Common myeloid progenitor, CD34-positive (primary cell): ENCODE measurements at regions of chr12 and their contacts with region 1.

Region 1: GRCh38 chr12:26884765-26885576 is 52.0 kb upstream of the ITPR2 start:
- DNase-seq: peak; percentile 89 to 94 (median 91)
- H3K4me3 ChIP-seq: peak overlapping the region in 4 of 7 experiments; percentile 11 to 62 (median 44)
- H3K27ac ChIP-seq: no peak overlapping the region
- H3K4me1 ChIP-seq: peaks cover 0 to 4% (median 1%) of the 10 kb centered on the region in 4 experiments
- H3K27me3 ChIP-seq: no peaks in the 10 kb centered on the region

Region 2: DNA sequence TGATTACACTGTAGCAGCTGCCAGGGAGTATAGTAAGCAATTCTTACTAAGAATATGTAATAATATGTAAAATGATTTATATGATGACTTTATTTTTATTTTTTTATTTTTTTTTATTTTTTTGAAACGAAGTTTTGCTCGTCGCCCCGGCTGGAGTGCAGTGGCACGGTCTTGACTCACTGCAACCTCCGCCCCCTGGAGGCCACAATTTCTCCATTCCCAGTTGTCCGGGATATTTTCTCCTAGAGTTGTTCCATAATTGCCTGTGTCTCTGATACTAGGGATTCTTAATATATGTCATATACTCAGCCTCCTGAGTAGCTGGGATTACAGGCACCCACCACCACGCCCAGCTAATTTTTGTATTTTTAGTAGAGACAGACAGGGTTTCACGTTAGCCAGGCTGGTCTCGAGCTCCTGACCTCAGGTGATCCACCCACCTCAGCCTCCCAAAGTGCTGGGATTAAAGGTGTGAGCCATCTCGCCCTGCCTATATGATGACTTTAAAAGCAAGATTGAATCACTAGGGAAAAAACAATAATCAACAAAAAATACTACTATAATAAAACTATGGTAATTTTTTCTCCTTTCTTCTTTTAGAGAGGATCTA is 39.8 kb before region 1 on chr12:
- CTCF ChIA-PET with region 1: interaction called, 42 read pairs
- POLR2A ChIA-PET with region 1: no interaction called
- DNase-seq: peak; percentile 44 to 58 (median 51)
- H3K4me3 ChIP-seq: peak overlapping the region in 1 of 7 experiments; percentile 39
- H3K27ac ChIP-seq: no peak overlapping the region
- H3K4me1 ChIP-seq: peaks cover 9 to 24% (median 16%) of the 10 kb centered on the region in 4 experiments
- H3K27me3 ChIP-seq: no peaks in the 10 kb centered on the region

Region 3: GRCh38 chr12:26863502-26863901 is 21.5 kb before region 1 on chr12:
- CTCF ChIA-PET with region 1: interaction called, 71 read pairs
- POLR2A ChIA-PET with region 1: no interaction called
- DNase-seq: peak; percentile 43 to 58 (median 46)
- H3K4me3 ChIP-seq: no peak overlapping the region
- H3K27ac ChIP-seq: no peak overlapping the region
- H3K4me1 ChIP-seq: peaks cover 0 to 18% (median 11%) of the 10 kb centered on the region in 4 experiments
- H3K27me3 ChIP-seq: no peaks in the 10 kb centered on the region

Region 4: DNA sequence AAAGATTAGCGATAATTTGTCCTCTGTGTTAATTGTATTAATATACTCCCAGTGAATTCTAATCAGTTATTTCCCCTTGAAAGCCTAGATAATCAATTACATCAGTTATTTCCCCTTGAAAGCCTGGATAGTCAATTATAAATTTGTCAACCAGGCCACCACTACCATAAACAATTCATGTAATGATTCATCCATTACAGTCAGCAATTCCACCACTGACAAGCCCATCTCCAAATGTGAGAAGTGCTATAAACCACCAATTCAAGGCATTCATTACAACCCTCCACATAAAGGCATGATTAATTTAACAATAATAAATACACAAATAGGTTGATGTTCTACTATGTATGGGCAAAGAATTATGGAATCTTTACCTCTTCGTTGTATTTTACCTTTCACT is 11.9 kb after region 1 on chr12:
- CTCF ChIA-PET with region 1: interaction called, 18 read pairs
- POLR2A ChIA-PET with region 1: no interaction called
- DNase-seq: no peak
- H3K4me3 ChIP-seq: no peak overlapping the region
- H3K27ac ChIP-seq: no peak overlapping the region
- H3K4me1 ChIP-seq: no peaks in the 10 kb centered on the region
- H3K27me3 ChIP-seq: no peaks in the 10 kb centered on the region